ENCODE measurements at regions of chr12 and their contacts with region 1.

Region 1: GRCh38 chr12:4307593-4308333 is 13.2 kb upstream of the TIGAR start:
- DNase-seq: no peak
- H3K4me3 ChIP-seq: peak overlapping the region; percentile 5 to 33 (median 24)
- H3K27ac ChIP-seq: peak overlapping the region; percentile 36 to 62 (median 48)
- H3K4me1 ChIP-seq: peaks cover 31 to 39% (median 38%) of the 10 kb centered on the region in 4 donors
- H3K27me3 ChIP-seq: no peaks in the 10 kb centered on the region
- CTCF ChIP-seq: peak; percentile 68 to 86 (median 83)
- EP300 ChIP-seq: no peak
- POLR2A ChIP-seq: no peak

Region 2: GRCh38 chr12:4477129-4477528 is 169.4 kb after region 1 on chr12:
- intact Hi-C with region 1: no loop called
- DNase-seq: no peak
- H3K4me3 ChIP-seq: no peak overlapping the region
- H3K27ac ChIP-seq: no peak overlapping the region
- H3K4me1 ChIP-seq: no peaks in the 10 kb centered on the region
- H3K27me3 ChIP-seq: no peaks in the 10 kb centered on the region
- CTCF ChIP-seq: no peak
- EP300 ChIP-seq: no peak
- POLR2A ChIP-seq: no peak

Region 3: GRCh38 chr12:4526923-4527546 is 219.3 kb after region 1 on chr12:
- intact Hi-C with region 1: loop called (anchors 5 kb)
- DNase-seq: no peak
- H3K4me3 ChIP-seq: no peak overlapping the region
- H3K27ac ChIP-seq: no peak overlapping the region
- H3K4me1 ChIP-seq: no peaks in the 10 kb centered on the region
- H3K27me3 ChIP-seq: no peaks in the 10 kb centered on the region
- CTCF ChIP-seq: peak; percentile 35 to 68 (median 63)
- EP300 ChIP-seq: no peak
- POLR2A ChIP-seq: no peak

Measured in esophagus muscularis mucosa (tissue), 4 donors.